ENCODE measurements at regions of chr1 and their contacts with region 1.

Region 1: DNA sequence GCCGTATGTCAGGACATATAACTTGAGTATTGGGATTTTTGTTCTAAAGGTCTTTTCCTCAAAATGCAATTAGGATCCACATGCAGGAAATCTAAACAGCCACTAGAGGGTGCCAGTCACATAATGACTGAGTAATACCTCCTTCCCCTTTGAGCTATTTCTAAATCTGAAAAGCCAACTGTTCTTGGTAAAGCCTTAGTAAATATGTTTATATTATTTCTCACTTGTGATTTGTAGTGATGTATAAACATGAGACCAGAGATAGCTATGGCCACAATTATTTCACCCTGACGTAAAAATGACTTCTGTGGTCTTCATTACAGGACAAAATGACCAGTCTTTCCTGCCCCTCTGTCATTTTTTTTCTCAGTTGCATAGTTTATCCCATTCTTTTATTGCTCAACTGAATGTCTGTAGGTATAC is 41.0 kb upstream of the DR1 start:
- DNase-seq: peak in 3 of 5 donors; percentile 26 to 59 (median 37)
- H3K4me3 ChIP-seq: no peak overlapping the region
- H3K27ac ChIP-seq: no peak overlapping the region
- H3K4me1 ChIP-seq: no peaks in the 10 kb centered on the region
- H3K27me3 ChIP-seq: no peaks in the 10 kb centered on the region
- CTCF ChIP-seq: peak; percentile 61 to 81 (median 77)
- EP300 ChIP-seq: no peak
- POLR2A ChIP-seq: no peak

Region 2: GRCh38 chr1:93080179-93080823 is 224.4 kb before region 1 on chr1:
- intact Hi-C with region 1: no loop called
- DNase-seq: no peak
- H3K4me3 ChIP-seq: peak overlapping the region; percentile 81
- H3K27ac ChIP-seq: peak overlapping the region in 1 of 2 donors; percentile 70
- H3K4me1 ChIP-seq: no peaks in the 10 kb centered on the region
- H3K27me3 ChIP-seq: no peaks in the 10 kb centered on the region
- CTCF ChIP-seq: peak in 1 of 3 donors; percentile 18
- EP300 ChIP-seq: no peak
- POLR2A ChIP-seq: no peak

Region 3: DNA sequence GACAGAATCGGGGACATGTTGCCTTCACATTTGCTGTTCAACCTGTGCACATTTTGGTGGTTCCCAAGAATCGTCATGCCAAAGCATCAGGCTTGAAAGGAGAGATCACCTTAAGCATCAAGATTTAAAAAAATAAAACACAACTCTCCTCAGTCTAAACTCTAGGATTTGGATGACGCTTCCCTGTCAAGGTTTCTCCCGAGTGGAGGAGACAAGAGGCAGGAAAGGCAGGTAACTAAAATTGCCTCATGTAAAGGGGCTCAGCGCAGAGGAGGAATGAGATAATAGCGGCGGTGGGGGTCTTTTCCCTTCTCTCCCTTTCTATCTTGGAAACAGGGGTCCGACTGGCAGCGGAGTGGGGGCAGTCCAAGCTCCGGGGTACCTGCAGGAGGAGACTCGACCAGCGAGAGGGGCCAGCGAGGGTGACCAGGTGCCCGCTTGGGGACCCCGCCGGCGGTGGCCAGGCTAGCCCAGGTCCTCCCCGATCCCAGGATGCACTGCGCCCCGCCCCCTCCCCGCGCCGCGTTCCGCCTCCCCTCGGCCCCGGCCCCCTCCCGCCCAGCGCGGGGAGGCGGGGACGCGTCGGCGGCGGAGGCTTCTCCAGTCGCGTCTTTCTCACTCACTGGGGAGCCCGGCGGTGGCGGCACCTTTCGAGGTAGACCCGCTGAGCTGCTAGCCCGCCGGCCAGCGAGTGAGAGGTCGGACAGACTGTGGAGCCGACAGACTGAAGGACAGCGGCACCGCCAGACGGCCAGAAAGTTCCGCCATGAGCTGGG is 143.0 kb after region 1 on chr1 and contains the start of gene FNBP1L:
- intact Hi-C with region 1: no loop called
- DNase-seq: peak; percentile 75 to 85 (median 81)
- H3K4me3 ChIP-seq: peak within 1 kb of the TSS; percentile 89
- H3K27ac ChIP-seq: peak within 1 kb of the TSS; percentile 64 to 74
- H3K4me1 ChIP-seq: no peaks in the 10 kb centered on the region
- H3K27me3 ChIP-seq: no peaks in the 10 kb centered on the region
- CTCF ChIP-seq: no peak
- EP300 ChIP-seq: no peak
- POLR2A ChIP-seq: peak; percentile 32
- total RNA-seq, gene FNBP1L: 16.2 to 27.6 (median 18.4) TPM

Region 4: GRCh38 chr1:93615582-93616150 is 310.9 kb after region 1 on chr1:
- intact Hi-C with region 1: loop called in 1 of 4 experiments (anchors 5 kb)
- DNase-seq: no peak
- H3K4me3 ChIP-seq: no peak overlapping the region
- H3K27ac ChIP-seq: no peak overlapping the region
- H3K4me1 ChIP-seq: peaks cover 5% of the 10 kb centered on the region
- H3K27me3 ChIP-seq: no peaks in the 10 kb centered on the region
- CTCF ChIP-seq: no peak
- EP300 ChIP-seq: no peak
- POLR2A ChIP-seq: no peak